Activated CD4-positive, alpha-beta memory T cell treated with anti-CD3 and anti-CD28 coated beads for 36 hours (primary cell): ENCODE measurements at regions of chr16 and their contacts with region 1.

Region 1: DNA sequence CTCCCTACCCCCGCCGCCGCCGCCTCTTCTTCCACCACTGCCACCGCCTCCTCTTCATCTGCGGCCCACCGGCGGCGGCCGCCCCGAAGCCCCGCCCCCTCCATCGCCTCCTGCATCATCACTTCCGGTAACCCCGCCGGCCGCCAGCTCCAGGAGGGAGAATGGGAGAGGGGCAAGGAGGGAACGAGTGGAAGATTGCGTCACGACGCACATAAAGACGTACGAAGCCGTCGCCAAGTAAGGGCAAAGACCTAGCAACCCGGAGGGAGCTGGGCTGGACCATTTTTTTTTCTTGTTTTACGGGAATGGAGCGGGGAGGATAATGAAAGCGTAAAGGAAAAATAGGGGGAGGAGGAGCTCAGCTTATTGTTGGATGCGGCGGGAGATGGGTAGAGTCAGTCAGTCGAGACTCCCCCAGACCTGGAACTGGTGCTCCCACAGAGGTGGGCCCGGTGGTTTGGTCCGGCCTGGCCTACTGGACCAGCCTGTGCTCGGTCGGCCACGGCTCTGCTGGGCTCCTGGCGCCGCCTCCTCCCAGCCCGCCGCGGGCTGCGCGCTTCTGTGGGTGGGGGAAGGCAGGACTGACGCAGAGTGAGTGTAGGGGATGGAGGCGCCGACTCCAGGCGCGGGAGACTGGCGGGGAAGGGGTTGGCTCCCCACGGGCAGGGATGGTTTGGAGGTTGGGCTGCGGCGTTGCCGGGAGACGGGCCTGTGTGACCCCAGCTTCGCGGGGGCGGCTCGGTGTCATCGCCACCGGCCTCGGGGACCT is at the starts of genes DCUN1D3 and LYRM1:
- DNase-seq: peak; percentile 94
- H3K4me3 Mint-ChIP-seq: peak within 1 kb of the TSS; percentile 81
- H3K27ac Mint-ChIP-seq: peak within 1 kb of the TSS; percentile 93
- H3K4me1 Mint-ChIP-seq: peaks cover 72% of the 10 kb centered on the region
- H3K27me3 Mint-ChIP-seq: no peaks in the 10 kb centered on the region
- total RNA-seq, gene DCUN1D3: 5.9 TPM
- total RNA-seq, gene LYRM1: 26.5 to 28.0 TPM

Region 2: DNA sequence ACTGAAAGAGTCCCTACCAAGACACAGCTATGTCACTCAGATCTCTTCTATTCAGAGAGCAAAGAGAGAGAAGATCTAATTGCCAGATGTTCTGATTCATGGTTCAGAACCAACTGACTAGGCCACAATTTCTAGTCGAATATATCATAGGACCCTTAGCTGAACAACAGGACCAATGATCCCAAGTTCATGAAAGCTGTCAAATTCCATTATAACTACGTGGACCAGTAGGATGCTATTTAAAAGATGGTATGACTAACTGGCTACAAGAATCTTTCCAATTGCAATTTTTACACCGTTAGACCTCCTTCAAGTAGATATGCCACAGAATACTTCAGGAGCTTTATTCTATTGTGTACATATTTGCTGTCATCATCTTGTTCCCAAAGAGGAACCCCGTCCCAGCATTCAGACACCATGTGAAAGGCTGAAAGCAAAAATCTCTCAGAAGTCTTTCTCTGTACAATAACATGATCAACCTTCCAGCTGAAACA is 26.3 kb before region 1 on chr16:
- CTCF ChIA-PET with region 1: interaction called, 4 read pairs
- POLR2A ChIA-PET with region 1: interaction called, 10 read pairs
- intact Hi-C with region 1: loop called (anchors 1 kb)
- DNase-seq: no peak
- H3K4me3 Mint-ChIP-seq: peak overlapping the region; percentile 34
- H3K27ac Mint-ChIP-seq: peak overlapping the region; percentile 81
- H3K4me1 Mint-ChIP-seq: peaks cover 46% of the 10 kb centered on the region
- H3K27me3 Mint-ChIP-seq: no peaks in the 10 kb centered on the region

Region 3: DNA sequence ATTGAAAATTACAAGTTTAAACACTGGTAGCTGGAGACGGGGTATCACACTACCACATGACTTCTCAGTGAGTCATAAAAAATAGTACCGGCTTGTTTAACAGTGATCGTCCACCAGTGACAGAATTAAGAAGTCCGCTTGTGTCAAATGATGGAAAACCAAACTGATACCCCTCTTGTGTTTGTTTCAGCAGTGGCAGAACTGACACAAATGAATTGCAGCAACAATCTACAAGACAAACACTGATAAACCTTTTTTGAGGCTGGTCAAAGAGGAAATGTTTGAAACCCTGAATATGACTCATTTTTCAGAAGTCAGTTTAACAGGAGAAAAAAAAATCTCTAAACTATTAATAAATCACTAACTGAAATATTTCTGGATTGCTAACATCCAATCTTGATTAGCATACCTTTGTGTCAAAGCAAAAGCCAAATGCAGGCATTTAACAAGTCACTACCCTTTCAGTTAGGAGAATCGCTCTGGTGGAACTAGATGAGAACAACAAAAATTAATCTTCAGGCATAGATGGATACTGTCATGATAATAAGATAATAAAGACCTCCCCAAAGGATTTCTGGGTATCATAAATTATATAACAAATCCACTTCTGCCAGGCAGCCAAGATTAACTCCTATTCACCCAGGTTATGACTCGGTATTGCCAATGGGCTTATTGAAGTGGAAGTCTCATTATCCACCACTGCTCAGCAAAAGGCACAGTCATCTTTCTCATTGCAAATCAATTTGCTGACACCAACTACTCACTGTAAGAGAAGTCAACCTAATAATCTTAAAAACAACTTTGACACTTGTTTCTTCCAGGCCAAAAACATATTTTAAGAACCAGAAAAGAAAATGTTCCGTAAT is 21.1 kb before region 1 on chr16:
- CTCF ChIA-PET with region 1: interaction called, 4 read pairs
- POLR2A ChIA-PET with region 1: interaction called, 10 read pairs
- intact Hi-C with region 1: loop called (anchors 1 kb)
- DNase-seq: no peak
- H3K4me3 Mint-ChIP-seq: no peak overlapping the region
- H3K27ac Mint-ChIP-seq: peak overlapping the region; percentile 31
- H3K4me1 Mint-ChIP-seq: peaks cover 42% of the 10 kb centered on the region
- H3K27me3 Mint-ChIP-seq: no peaks in the 10 kb centered on the region

Region 4: GRCh38 chr16:20910781-20911321 is 10.4 kb after region 1 on chr16:
- CTCF ChIA-PET with region 1: no interaction called
- POLR2A ChIA-PET with region 1: interaction called, 28 read pairs
- intact Hi-C with region 1: loop called (anchors 1 kb)
- DNase-seq: no peak
- H3K4me3 Mint-ChIP-seq: no peak overlapping the region
- H3K27ac Mint-ChIP-seq: peak overlapping the region; percentile 75
- H3K4me1 Mint-ChIP-seq: peaks cover 24% of the 10 kb centered on the region
- H3K27me3 Mint-ChIP-seq: no peaks in the 10 kb centered on the region

Region 5: GRCh38 chr16:21321736-21322135 is 421.3 kb after region 1 on chr16:
- CTCF ChIA-PET with region 1: no interaction called
- POLR2A ChIA-PET with region 1: no interaction called
- intact Hi-C with region 1: no loop called
- DNase-seq: no peak
- H3K4me3 Mint-ChIP-seq: no peak overlapping the region
- H3K27ac Mint-ChIP-seq: no peak overlapping the region
- H3K4me1 Mint-ChIP-seq: no peaks in the 10 kb centered on the region
- H3K27me3 Mint-ChIP-seq: peaks cover 2% of the 10 kb centered on the region